A549 (cell line): ENCODE measurements at regions of chr16 and their contacts with region 1.

Region 1: DNA sequence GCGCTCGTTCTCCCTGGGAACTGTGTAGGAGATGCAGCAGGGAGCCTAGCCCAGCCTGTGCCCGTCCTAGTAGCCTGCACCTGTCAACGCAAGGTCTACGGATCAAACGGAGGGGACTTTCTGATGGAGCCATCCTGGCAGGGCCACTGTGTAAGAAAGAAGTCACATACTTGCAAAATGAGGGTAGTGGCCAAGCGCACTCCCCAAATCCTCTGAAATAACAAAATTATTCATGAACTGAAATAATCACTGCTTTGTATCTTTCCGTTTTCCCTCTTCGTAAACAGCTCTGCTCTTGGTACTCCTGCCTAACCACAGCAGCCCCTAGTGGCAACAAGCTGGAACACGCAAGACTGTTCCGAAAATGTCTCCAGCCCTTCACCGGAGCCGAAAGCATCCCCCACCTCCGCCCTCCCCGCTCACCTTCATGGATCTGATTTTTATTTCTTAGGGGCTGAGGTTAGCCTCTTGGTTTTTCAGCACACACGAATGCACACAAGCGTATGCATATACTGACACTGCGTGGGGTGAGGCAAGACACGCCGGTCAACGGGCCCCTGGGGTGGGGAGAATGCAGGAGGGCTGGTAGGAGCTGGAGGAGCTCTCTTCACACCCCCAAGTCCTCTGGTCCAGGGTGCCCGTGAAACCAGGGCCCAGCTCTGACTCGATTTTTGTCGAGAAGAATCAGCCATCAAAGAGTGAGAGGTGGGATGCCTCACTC is 100.8 kb downstream of the ABCC12 start:
- DNase-seq: peak; percentile 30 to 66
- ATAC-seq: peak; percentile 92
- H3K4me3 ChIP-seq: no peak overlapping the region; the same call in 2 of the 3 replicates
- H3K27ac ChIP-seq: peak overlapping the region; percentile 41 to 47; a peak in 3 of 6 replicates
- H3K4me1 ChIP-seq: peaks cover 22% of the 10 kb centered on the region
- CTCF ChIP-seq: peak; percentile 76
- EP300 ChIP-seq: no peak
- POLR2A ChIP-seq: no peak
- RAD21 ChIP-seq: peak; percentile 82 to 88

Region 2: GRCh38 chr16:47888142-47888541 is 166.9 kb before region 1 on chr16:
- CTCF ChIA-PET with region 1: no interaction called
- POLR2A ChIA-PET with region 1: no interaction called
- DNase-seq: peak; percentile 13 to 74
- ATAC-seq: peak; percentile 80 to 92
- H3K4me3 ChIP-seq: no peak overlapping the region
- H3K27ac ChIP-seq: peak overlapping the region in 1 of 2 experiments; percentile 51; a peak in 2 of 6 replicates
- H3K4me1 ChIP-seq: peaks cover 18% of the 10 kb centered on the region
- CTCF ChIP-seq: no peak
- EP300 ChIP-seq: no peak
- POLR2A ChIP-seq: no peak
- RAD21 ChIP-seq: no peak

Region 3: DNA sequence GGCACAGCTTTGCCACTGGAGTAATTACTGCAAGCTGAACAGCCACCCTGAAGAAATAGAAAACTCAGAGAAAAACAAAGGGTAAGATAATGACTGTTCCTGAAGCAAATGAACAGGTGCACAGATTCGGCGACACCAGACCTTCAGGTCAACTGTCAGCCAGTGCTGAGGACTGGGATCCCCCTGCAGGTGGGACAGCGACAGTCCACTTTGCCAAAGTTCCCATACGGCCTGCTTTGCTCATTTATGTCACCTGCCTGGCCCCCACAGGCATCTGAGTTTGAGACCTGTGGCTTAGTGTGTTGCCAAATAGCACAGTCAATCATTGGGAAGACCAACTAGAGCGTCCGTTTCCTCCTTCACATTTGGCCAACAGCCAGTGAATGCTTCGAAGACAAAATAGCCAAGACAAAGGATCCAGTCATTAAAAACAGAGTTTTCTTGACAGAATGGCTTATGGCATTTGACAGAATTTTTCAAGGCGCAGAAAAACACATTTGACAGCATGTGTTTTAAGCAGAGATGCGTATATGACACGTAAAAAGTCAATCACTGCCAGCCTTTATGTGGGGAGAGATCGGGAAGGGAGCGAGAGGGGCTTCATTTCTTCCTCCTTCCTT is 13.1 kb before region 1 on chr16:
- CTCF ChIA-PET with region 1: interaction called, 27 read pairs
- POLR2A ChIA-PET with region 1: no interaction called
- DNase-seq: peak in 1 of 2 experiments; percentile 24
- ATAC-seq: 0 out of 6 replicates have a peak, but pooled peaks of 1 of the 2 experiments have one; percentile 44
- H3K4me3 ChIP-seq: no peak overlapping the region
- H3K27ac ChIP-seq: no peak overlapping the region
- H3K4me1 ChIP-seq: no peaks in the 10 kb centered on the region
- CTCF ChIP-seq: no peak
- EP300 ChIP-seq: no peak
- POLR2A ChIP-seq: no peak
- RAD21 ChIP-seq: peak in 1 of 2 experiments; percentile 20; a peak in 1 of 5 replicates